ENCODE measurements at regions of chr1 and their contacts with region 1.

Region 1: DNA sequence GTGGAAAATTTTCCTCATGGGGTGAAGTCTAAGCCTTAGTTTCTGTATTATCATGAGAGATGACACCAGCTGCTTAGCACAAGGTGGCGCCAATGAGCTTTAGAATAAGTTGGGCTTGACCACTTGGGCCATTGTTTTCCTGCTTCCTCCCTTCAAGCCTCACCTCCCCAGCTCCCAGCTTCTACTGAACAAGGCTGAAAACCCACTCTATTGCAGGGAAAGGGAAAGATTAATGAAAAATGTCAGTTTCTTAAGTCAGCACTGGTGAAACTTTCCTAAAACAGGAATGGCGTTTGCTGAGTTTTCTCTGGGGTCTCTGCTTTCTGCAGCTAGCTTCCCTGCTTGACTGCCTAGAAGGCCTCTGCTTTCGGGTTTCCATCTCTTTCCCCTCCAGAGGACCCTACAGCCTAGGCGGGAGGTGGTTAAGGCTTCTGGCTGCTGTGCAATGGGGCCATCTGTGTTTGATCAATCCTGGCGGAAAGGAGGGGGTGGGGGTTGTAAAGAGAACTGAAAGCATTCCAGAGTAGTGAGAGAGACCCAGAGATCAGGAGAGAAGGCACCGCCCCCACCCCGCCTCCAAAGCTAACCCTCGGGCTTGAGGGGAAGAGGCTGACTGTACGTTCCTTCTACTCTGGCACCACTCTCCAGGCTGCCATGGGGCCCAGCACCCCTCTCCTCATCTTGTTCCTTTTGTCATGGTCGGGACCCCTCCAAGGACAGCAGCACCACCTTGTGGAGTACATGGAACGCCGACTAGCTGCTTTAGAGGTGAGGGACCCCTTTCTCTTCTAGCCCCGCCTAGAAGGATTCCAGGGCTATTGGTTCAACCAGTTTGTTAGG is at the start of gene OLFML3:
- ATAC-seq: peak; percentile 64 to 74 (median 70)
- H3K4me3 ChIP-seq: no peak within 1 kb of the TSS
- H3K27ac ChIP-seq: no peak within 1 kb of the TSS
- H3K4me1 ChIP-seq: peaks cover 31 to 41% of the 10 kb centered on the region in 2 donors
- total RNA-seq, gene OLFML3: 0.27 to 172 (median 3.8) TPM

Region 2: DNA sequence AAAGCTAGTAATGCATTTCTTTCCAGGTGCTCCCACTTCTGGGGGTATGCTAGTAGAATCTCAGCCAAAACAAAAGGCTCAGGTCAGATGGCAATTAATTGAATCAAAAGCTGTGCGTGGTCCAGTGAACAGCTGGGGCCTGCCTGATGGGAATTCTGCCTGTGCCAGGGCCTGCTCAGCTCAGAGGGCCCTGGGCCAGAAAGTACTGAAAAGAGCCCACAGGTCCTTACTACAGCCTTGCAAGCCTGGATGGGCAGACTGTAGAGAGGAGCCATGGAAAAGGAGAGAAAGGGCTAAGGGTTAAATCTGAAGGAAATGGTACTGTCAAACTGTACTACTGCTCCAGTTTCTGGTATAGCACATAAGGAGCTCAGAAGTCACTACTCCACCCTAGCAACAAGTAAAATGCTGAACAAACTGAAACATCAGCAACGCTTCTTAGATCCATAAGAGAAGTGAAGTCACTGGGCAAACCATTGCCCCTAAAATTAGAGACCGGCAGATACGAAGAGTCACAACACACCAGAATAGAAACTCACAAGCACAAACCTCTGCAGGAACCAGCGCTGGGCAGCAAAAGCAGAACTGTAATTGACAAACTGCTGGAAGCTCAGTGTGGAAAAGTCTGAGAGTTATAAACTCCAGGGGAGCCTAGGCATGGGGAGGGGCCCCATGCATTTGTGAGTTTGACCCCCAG is 295.7 kb after region 1 on chr1:
- in situ Hi-C with region 1: loop called in 5 of 9 experiments (anchors 10 to 25 kb)
- ATAC-seq: no peak
- H3K4me3 ChIP-seq: no peak overlapping the region
- H3K27ac ChIP-seq: no peak overlapping the region
- H3K4me1 ChIP-seq: no peaks in the 10 kb centered on the region

Region 3: GRCh38 chr1:114282751-114283403 is 303.8 kb after region 1 on chr1:
- in situ Hi-C with region 1: loop called in 5 of 9 experiments (anchors 10 to 25 kb)
- ATAC-seq: peak; percentile 94 to 100 (median 98)
- H3K4me3 ChIP-seq: no peak overlapping the region
- H3K27ac ChIP-seq: no peak overlapping the region
- H3K4me1 ChIP-seq: peaks cover 0 to 2% of the 10 kb centered on the region in 2 donors

Measured in motor neuron (in vitro differentiated cells).